ENCODE measurements at regions of chr16 and their contacts with region 1.

Region 1: DNA sequence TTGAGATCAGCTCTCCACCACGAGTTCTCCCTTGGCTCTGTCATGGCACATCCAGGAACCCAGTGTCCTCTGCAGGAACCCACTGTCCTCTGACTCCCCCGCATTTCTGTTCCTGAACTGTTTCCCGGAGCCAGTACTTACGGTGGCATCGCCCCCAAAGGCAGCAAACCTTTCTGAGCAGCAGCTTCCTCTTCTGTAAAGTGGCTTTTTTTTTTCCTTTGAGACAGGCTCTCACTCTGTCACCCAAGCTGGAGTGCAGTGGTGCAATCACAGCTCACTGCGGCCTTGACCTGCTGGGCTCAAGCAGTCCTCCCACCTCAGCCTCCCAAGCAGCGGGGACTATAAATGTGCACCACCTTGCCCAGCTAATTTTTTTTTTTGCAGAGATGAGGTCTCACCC is 32.2 kb downstream of the NAGPA start:
- DNase-seq: no peak
- ATAC-seq: no peak
- H3K4me3 ChIP-seq: no peak overlapping the region
- H3K4me3 Mint-ChIP-seq: no peak overlapping the region
- H3K27ac ChIP-seq: no peak overlapping the region
- H3K27ac Mint-ChIP-seq: no peak overlapping the region
- H3K4me1 ChIP-seq: no peaks in the 10 kb centered on the region
- H3K4me1 Mint-ChIP-seq: no peaks in the 10 kb centered on the region
- H3K27me3 ChIP-seq: peaks cover 2 to 41% of the 10 kb centered on the region in 2 experiments
- H3K27me3 Mint-ChIP-seq: peaks cover 16 to 33% of the 10 kb centered on the region in 2 donors

Region 2: DNA sequence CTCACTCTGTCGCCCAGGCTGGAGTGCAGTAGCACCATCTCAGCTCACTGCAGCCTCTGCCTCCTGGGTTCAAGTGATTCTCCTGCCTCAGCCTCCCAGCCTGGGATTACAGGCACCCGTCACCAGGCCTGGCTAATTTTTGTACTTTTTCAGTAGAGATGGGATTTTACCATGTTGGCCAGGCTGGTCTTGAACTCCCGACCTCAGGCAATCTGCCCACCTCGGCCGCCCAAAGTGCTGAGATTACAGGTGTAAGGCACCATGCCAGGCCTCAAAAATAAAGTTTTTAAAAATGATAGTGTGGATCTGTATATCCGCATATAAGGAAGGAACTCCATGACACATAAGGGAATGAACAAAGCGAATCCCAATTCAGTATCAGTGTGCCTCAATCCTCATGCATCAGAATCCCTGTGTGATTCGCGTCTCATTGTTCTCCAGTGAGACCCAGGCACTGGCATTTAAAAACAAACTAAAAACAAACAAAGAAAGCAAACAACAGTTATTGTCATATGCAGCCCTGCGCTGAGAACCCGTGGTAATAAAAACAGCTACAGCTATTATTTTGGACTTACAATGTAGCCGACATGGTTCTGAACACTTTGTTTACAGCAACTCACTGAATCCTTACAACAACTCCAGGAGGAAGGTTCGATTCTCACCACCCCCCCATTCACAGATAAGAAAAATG is 1066.9 kb before region 1 on chr16:
- CTCF ChIA-PET with region 1: interaction called in 1 of 2 experiments, 10 read pairs
- POLR2A ChIA-PET with region 1: no interaction called
- DNase-seq: no peak
- ATAC-seq: no peak
- H3K4me3 ChIP-seq: no peak overlapping the region
- H3K4me3 Mint-ChIP-seq: no peak overlapping the region
- H3K27ac ChIP-seq: no peak overlapping the region
- H3K27ac Mint-ChIP-seq: no peak overlapping the region
- H3K4me1 ChIP-seq: peaks cover 0 to 11% of the 10 kb centered on the region in 2 experiments
- H3K4me1 Mint-ChIP-seq: peaks cover 0 to 4% (median 4%) of the 10 kb centered on the region in 3 donors
- H3K27me3 ChIP-seq: peaks cover 0 to 13% of the 10 kb centered on the region in 2 experiments
- H3K27me3 Mint-ChIP-seq: no peaks in the 10 kb centered on the region

Region 3: DNA sequence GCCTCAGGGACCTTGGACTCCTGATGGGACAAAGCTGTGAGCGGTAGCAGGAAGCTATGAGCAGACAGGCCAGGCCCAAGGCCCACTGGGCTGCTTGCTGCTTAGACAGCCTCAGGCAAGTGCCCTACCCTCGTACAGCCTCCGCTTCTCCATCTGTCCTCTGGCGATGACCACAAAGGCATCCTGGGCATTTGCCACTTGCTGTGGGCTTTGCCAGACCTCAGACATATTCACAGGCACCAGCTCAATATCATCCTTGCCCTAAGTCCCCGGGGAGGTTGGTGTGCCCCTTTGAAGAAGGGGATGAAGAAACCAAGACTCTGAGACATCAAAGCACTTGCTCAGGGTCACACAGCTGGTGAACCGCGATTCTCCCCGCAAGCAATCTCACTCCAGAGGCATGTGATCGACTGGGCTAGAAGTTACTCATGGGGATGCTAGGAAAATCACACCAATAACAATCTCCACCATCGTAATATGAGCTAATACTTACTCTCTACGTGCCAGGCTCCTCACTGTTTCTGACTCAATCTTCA is 86.3 kb before region 1 on chr16:
- CTCF ChIA-PET with region 1: no interaction called
- POLR2A ChIA-PET with region 1: no interaction called
- DNase-seq: no peak
- ATAC-seq: no peak
- H3K4me3 ChIP-seq: no peak overlapping the region
- H3K4me3 Mint-ChIP-seq: no peak overlapping the region
- H3K27ac ChIP-seq: no peak overlapping the region
- H3K27ac Mint-ChIP-seq: no peak overlapping the region
- H3K4me1 ChIP-seq: no peaks in the 10 kb centered on the region
- H3K4me1 Mint-ChIP-seq: no peaks in the 10 kb centered on the region
- H3K27me3 ChIP-seq: peaks cover 0 to 44% of the 10 kb centered on the region in 2 experiments
- H3K27me3 Mint-ChIP-seq: peaks cover 3 to 8% of the 10 kb centered on the region in 2 donors

Region 4: DNA sequence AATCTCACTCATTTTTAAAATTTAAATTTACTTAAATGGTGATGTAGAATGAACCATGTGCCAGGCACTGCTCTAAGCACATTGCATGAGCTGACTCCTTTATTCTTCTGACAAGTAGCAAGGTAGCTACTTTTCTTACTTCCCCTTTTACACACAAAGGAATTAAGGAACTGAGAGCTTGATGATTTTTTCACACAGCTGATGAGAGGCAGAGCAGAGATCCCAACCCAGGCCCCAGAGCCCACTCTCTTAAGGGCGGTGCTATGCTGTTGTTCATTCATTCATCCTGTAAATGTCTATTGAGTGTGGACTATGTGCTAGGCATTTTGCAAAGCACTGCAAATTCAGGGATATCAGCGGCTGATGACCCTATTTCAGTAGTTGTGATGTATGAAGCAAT is 25.5 kb before region 1 on chr16:
- CTCF ChIA-PET with region 1: no interaction called
- POLR2A ChIA-PET with region 1: interaction called in 1 of 2 experiments, 10 read pairs
- DNase-seq: no peak
- ATAC-seq: no peak
- H3K4me3 ChIP-seq: no peak overlapping the region
- H3K4me3 Mint-ChIP-seq: no peak overlapping the region
- H3K27ac ChIP-seq: no peak overlapping the region
- H3K27ac Mint-ChIP-seq: no peak overlapping the region
- H3K4me1 ChIP-seq: no peaks in the 10 kb centered on the region
- H3K4me1 Mint-ChIP-seq: no peaks in the 10 kb centered on the region
- H3K27me3 ChIP-seq: peaks cover 0 to 19% of the 10 kb centered on the region in 2 experiments
- H3K27me3 Mint-ChIP-seq: peaks cover 13 to 25% of the 10 kb centered on the region in 2 donors